Upper lobe of right lung (tissue), 1 donor: ENCODE measurements at regions of chr16 and their contacts with region 1.

Region 1: GRCh38 chr16:89791278-89791995 is 25.0 kb downstream of the FANCA start:
- DNase-seq: no peak
- ATAC-seq: no peak
- H3K4me3 ChIP-seq: no peak overlapping the region
- H3K27ac ChIP-seq: no peak overlapping the region
- H3K4me1 ChIP-seq: no peaks in the 10 kb centered on the region
- H3K27me3 ChIP-seq: no peaks in the 10 kb centered on the region
- CTCF ChIP-seq: no peak

Region 2: GRCh38 chr16:89708441-89708931 is 83.0 kb before region 1 on chr16:
- intact Hi-C with region 1: loop called (anchors 5 kb)
- DNase-seq: no peak
- ATAC-seq: no peak
- H3K4me3 ChIP-seq: no peak overlapping the region
- H3K27ac ChIP-seq: no peak overlapping the region
- H3K4me1 ChIP-seq: peaks cover 8% of the 10 kb centered on the region
- H3K27me3 ChIP-seq: peaks cover 7% of the 10 kb centered on the region
- CTCF ChIP-seq: no peak

Region 3: GRCh38 chr16:89873972-89874689 is 82.7 kb after region 1 on chr16:
- intact Hi-C with region 1: no loop called
- DNase-seq: peak; percentile 98
- ATAC-seq: peak; percentile 94
- H3K4me3 ChIP-seq: peak overlapping the region; percentile 80
- H3K27ac ChIP-seq: peak overlapping the region; percentile 94
- H3K4me1 ChIP-seq: peaks cover 20% of the 10 kb centered on the region
- H3K27me3 ChIP-seq: no peaks in the 10 kb centered on the region
- CTCF ChIP-seq: no peak